ENCODE measurements at regions of chr16 and their contacts with region 1.

Region 1: DNA sequence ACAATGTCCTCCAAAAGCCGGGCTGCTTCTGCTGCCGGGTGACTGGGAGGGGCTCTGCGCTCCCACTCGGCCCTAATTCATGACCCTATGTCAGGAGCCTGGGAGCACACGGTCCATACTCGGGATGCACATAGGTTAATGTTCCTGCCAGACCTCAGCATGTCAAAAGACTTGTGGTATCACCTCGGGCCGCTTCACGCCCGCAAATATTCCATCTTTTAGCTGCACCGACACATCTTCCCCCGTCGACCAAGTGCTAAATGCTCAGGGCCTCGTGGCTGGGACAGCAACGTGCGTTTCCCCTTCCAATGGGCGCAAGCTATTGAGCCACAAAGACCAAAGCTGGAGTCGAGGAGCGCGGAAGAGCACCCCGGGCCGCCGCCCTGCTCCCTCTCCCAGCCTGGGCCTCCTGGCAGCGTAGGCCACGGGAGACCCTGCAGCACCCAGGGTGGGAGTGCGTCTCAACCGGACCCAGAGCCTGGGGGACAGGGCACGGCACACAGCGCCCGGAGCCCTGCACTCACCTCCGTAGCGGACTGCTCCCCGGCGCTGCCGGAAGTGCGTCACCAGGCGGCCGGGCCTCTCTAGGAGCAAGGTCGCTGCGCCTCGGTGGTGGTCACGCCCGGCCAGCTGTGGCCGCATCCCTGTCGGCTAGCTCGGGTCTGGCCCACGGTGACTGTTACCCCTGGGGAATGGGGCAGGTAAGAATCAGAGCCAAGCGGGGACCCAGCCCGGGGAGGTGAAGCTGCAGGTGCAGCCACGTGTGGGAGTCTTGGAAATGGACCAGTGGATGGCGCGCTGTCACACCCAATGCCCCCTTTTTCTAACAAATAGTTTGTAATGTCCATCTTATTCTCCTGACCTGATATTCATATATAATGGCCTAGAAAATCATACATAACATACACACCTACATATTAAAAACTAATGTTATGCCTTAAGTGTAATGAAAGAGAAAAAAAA is at the start of gene ZNF23:
- DNase-seq: peak; percentile 80 to 92 (median 88)
- H3K4me3 ChIP-seq: peak within 1 kb of the TSS; percentile 88
- H3K27ac ChIP-seq: peak within 1 kb of the TSS; percentile 40 to 80
- H3K4me1 ChIP-seq: peaks cover 4% of the 10 kb centered on the region
- H3K27me3 ChIP-seq: no peaks in the 10 kb centered on the region
- CTCF ChIP-seq: peak in 1 of 3 donors; percentile 26
- EP300 ChIP-seq: no peak
- POLR2A ChIP-seq: peak; percentile 86
- total RNA-seq, gene ZNF23: 5.4 to 10.8 (median 8.9) TPM

Region 2: DNA sequence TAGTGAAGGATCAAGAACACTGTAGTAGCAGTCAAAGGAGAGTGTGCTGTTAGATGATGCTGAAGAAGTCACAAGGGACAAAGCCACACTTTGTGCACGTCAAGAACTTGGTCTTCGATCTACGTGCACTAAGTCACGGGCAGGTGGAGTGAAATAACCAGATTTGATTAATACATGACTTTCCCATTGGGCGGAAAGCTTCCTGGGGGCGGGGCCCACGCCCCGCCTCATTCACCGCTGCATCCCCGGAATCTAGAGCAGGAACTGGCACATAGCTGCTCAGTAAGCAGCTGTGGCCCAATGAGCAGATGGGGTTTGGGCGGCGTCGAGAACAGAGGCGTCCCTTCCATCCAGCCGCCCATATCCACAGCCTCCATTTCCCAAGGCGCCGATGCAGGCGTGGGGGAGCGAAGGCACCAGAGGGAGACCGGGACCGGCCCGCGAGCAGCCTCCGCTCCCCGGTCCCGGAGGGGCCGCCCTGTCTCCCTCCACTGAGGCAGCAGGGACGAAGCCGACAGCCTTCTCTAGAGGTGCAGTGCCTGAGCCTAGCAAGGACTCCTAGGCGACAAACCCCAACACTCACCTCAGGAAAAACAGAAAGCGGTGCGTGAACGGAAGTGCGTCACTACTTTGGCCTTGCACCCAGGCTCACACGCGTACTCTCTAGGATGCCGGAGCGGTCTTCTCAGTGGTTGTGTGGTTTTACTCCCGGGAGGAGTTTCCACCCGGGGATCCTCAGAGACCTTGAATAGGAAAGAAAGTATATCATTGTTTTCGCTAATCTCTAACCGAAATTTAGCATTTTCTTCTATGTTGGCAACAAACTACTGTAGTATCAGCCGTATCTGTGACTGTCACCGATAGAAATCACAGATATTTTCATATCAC is 22.3 kb after region 1 on chr16:
- intact Hi-C with region 1: loop called in 1 of 4 experiments (anchors 2 kb)
- DNase-seq: peak; percentile 85 to 90 (median 87)
- H3K4me3 ChIP-seq: peak overlapping the region; percentile 100
- H3K27ac ChIP-seq: peak overlapping the region; percentile 69 to 96
- H3K4me1 ChIP-seq: peaks cover 1% of the 10 kb centered on the region
- H3K27me3 ChIP-seq: no peaks in the 10 kb centered on the region
- CTCF ChIP-seq: no peak
- EP300 ChIP-seq: no peak
- POLR2A ChIP-seq: peak; percentile 89

Region 3: GRCh38 chr16:71979617-71980016 is 517.6 kb after region 1 on chr16:
- intact Hi-C with region 1: no loop called
- DNase-seq: no peak
- H3K4me3 ChIP-seq: no peak overlapping the region
- H3K27ac ChIP-seq: no peak overlapping the region
- H3K4me1 ChIP-seq: no peaks in the 10 kb centered on the region
- H3K27me3 ChIP-seq: no peaks in the 10 kb centered on the region
- CTCF ChIP-seq: no peak
- EP300 ChIP-seq: no peak
- POLR2A ChIP-seq: no peak

Measured in ovary (tissue), 10 donors.